ENCODE measurements at regions of chr16 and their contacts with region 1.

Region 1: DNA sequence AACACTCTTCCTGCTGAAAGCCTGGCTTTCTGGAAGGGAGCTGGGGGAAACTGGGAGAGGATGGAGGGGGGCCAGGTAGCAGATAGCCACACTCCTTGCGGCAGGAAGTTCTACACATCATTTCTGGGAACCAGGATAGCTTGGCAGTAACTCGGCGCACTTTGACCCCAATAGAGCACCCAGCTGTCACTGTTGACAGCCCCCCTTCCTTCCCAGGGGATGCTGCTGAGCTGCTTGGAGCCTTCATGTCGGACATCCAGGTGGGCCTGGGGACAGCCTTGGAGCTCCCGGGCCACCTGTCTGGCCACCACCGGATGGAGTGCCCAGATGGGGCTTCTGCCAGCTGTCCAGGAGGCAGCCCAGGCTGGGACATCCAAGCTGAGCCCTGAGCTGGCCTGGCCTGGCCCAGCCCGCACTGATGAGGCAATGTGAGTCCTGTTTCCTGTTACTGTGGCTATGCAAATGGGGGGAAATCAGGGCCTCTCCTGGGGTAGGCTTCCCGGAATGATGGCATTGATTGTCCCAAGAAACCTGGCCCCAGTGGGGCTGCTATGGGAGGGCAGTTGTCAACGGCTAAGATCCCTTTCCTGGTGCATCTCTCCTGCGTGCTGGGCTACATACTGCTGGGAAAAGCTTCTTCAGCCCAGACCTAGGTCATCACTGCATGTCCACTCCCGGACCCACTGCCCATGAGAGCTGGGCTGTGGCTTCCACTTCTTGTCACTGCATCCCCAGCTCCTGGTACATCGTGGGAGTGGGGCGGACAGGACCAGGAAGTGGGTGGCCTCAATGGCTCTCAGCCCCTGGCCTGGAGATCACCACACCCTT is 50.0 kb downstream of the SOCS1 start:
- DNase-seq: no peak
- H3K4me3 ChIP-seq: no peak overlapping the region
- H3K27ac ChIP-seq: peak overlapping the region in 1 of 2 donors; percentile 58
- H3K4me1 ChIP-seq: no peaks in the 10 kb centered on the region
- H3K27me3 ChIP-seq: no peaks in the 10 kb centered on the region
- CTCF ChIP-seq: no peak
- POLR2A ChIP-seq: no peak

Region 2: GRCh38 chr16:10558746-10559641 is 647.0 kb before region 1 on chr16:
- intact Hi-C with region 1: no loop called
- DNase-seq: peak; percentile 72 to 78
- H3K4me3 ChIP-seq: peak overlapping the region; percentile 25 to 63 (median 32)
- H3K27ac ChIP-seq: peak overlapping the region; percentile 81 to 98
- H3K4me1 ChIP-seq: peaks cover 5 to 6% of the 10 kb centered on the region in 2 donors
- H3K27me3 ChIP-seq: no peaks in the 10 kb centered on the region
- CTCF ChIP-seq: no peak
- POLR2A ChIP-seq: no peak

Region 3: DNA sequence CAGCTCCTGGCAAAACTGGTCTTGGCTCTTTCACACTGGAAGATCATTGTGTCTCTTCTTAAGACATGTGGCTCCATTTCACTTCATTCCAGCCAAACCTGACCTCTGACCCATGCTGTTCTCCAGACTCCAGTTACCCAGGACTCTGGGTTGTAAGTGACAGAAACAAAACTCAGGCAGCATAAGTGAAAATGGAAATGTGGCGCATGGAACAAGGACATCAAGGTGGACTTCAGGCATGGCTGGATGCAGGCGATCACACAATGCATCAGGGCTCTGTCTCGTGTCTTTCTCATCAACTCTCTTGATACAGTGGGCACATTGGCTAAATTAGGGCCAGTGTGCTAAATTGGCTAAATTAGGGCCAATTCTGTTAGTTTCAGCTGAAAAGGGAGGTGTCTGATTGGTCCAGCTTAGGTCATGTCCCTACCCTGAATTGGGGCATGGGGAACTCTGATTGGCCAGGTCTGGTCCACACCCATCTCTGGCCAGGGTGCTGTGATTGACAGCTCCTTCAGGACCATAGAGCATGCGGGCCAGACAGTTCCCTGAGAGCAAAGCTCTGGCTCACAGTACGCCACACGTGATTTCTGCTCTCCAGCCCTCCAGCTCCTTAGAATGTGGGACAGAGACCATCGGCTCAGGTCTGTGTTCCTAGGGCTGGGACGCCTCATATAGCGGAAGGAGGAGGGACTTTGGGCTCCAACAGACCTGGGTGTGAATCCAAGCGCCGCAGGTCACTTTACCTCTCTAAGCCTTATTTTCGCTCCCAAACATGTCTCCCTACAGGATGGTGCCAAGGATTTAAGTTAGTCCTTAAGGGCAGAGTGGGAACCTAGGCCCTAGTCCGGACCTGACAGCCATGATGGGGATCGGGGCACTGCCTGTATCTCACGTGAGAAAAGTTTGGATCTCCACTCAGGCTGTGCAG is 32.6 kb after region 1 on chr16:
- intact Hi-C with region 1: loop called (anchors 2 kb)
- DNase-seq: no peak
- H3K4me3 ChIP-seq: no peak overlapping the region
- H3K27ac ChIP-seq: no peak overlapping the region
- H3K4me1 ChIP-seq: no peaks in the 10 kb centered on the region
- H3K27me3 ChIP-seq: no peaks in the 10 kb centered on the region
- CTCF ChIP-seq: no peak
- POLR2A ChIP-seq: no peak